CD8-positive, alpha-beta T cell (primary cell): ENCODE measurements at regions of chr7 and their contacts with region 1.

Region 1: DNA sequence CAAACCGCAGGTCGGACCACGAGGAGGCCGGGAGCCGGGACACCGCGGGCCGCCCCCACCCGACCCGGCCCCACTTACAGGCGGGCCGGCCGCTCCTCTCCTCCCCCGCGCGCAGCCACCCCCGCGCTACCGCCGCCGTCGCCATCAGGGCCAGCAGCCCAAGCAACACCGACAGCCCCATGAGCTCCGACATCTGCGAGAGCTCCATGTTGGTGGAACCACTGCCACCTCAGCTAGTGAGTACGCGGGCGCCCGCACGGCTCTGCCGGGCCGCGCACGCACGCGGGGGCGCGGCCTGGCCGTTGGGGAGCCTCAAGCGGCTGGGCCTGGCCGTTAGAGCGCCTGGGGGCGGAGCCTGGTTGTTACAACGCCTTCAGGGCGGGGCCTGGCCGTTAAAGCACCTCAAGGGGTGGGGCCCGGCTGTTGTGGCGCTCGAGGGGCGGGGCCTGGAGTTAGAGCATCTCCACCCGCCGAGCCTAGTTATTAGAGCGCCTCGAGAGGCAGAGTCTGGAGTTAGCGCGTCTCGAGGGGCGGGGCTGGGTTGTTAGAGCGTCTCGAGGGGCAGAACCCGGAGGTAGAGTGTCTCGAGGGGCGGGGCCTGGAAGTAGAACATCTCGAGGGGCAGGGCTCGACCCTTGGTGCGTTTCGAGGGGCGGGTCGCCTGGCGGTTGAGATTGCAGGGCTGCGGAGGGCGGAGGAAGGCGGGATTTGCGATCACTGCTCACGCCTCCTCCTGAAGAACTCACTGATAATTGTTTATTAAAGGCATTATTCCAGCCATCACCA is at the start of gene TBL2:
- DNase-seq: peak; percentile 96 to 99 (median 99)
- ATAC-seq: peak; percentile 91
- H3K4me3 ChIP-seq: peak within 1 kb of the TSS; percentile 77 to 97
- H3K4me3 Mint-ChIP-seq: peak within 1 kb of the TSS; percentile 94
- H3K27ac ChIP-seq: peak within 1 kb of the TSS; percentile 72 to 95
- H3K27ac Mint-ChIP-seq: peak within 1 kb of the TSS; percentile 97
- H3K4me1 ChIP-seq: peaks cover 21% of the 10 kb centered on the region
- H3K4me1 Mint-ChIP-seq: peaks cover 27% of the 10 kb centered on the region
- H3K27me3 ChIP-seq: no peaks in the 10 kb centered on the region
- H3K27me3 Mint-ChIP-seq: no peaks in the 10 kb centered on the region
- CTCF ChIP-seq: no peak
- total RNA-seq, gene TBL2: 14.9 to 16.7 TPM

Region 2: GRCh38 chr7:73522105-73522872 is 56.2 kb before region 1 on chr7 and contains the start of gene BAZ1B:
- CTCF ChIA-PET with region 1: no interaction called
- POLR2A ChIA-PET with region 1: interaction called, 20 read pairs
- intact Hi-C with region 1: loop called (anchors 1 kb)
- DNase-seq: peak; percentile 92 to 98 (median 96)
- ATAC-seq: peak; percentile 93
- H3K4me3 ChIP-seq: peak within 1 kb of the TSS; percentile 65 to 87
- H3K4me3 Mint-ChIP-seq: peak within 1 kb of the TSS; percentile 93
- H3K27ac ChIP-seq: peak within 1 kb of the TSS; percentile 90 to 92
- H3K27ac Mint-ChIP-seq: peak within 1 kb of the TSS; percentile 96
- H3K4me1 ChIP-seq: peaks cover 59% of the 10 kb centered on the region
- H3K4me1 Mint-ChIP-seq: peaks cover 66% of the 10 kb centered on the region
- H3K27me3 ChIP-seq: no peaks in the 10 kb centered on the region
- H3K27me3 Mint-ChIP-seq: no peaks in the 10 kb centered on the region
- CTCF ChIP-seq: no peak
- total RNA-seq, gene BAZ1B: 32.2 to 37.2 TPM

Region 3: DNA sequence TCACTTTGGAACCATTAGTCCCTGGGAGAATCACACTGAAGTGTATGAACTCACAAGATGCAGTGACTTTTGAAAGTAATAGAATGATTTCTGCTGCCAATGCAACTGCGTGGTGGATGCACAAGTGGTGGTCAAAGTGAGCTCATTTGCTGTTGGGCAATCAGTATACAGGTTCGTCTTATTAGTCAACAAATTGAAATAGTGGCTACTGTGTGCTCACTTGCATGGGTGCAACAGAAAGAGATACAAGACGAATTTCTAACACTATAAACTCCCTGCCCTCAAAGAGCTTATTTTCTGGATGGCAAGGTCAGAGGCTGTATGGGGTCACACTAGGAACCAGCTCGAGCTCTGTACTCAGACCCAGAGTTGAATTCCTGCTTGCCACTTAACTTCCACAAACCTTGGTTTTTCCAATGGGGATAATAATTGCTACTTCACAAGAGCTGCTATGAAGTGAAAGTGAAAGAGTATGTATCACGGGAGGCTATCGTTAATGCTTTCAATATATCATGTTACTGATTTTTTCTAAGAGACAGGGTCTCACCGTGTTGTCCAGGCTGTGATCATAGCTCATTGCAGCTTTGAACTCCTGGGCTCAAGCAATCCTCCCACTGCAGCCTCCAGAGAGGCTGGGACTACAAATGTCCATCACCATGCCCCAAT is 12.7 kb before region 1 on chr7:
- CTCF ChIA-PET with region 1: interaction called, 3 read pairs
- POLR2A ChIA-PET with region 1: interaction called, 14 read pairs
- intact Hi-C with region 1: no loop called
- DNase-seq: peak in 1 of 9 experiments; percentile 37
- ATAC-seq: no peak
- H3K4me3 ChIP-seq: peak overlapping the region; percentile 18 to 49
- H3K4me3 Mint-ChIP-seq: peak overlapping the region; percentile 85
- H3K27ac ChIP-seq: peak overlapping the region in 1 of 2 experiments; percentile 44
- H3K27ac Mint-ChIP-seq: peak overlapping the region; percentile 83
- H3K4me1 ChIP-seq: peaks cover 11% of the 10 kb centered on the region
- H3K4me1 Mint-ChIP-seq: peaks cover 33% of the 10 kb centered on the region
- H3K27me3 ChIP-seq: no peaks in the 10 kb centered on the region
- H3K27me3 Mint-ChIP-seq: no peaks in the 10 kb centered on the region
- CTCF ChIP-seq: no peak

Region 4: DNA sequence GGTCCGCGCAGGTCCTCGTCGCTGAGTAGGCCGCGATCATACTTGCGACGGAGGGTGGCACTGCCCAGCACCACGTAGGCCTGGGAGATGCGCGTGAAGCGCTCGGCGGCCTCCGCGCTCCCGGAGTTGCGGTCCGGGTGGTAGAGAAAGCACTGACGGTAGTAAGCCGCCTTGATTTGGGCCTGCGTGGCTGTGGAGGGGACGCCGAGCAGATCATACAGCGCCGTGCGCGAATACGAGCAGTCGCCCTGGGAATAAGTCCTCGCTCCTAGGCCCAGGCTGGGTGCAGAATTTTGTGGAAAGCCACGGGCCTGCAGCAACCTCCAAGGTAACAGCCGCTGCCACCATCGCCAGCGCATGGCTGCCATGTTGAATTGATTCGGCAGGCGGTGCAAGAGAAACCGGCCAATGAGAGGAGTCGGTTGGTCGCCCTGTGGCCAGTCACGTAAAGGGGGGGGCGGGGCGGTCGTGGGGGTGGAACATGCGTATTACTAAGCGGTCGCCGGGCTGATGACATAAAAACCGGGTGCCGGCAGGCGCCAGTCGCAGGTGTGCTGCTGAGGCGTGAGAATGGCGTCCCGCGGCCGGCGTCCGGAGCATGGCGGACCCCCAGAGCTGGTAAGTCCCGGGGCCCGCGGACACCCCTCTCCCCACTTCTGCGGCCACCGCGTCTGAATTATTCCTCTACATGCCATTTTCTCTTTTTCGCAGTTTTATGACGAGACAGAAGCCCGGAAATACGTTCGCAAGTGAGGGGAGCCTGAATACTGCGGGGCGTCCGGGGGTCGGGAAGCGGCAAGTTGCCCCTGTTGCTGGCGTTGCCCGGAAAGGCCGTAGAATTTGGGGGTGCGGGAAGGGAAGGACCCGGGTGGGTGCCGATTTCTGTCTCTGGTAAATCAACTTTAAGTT is 104.8 kb after region 1 on chr7 and contains the starts of genes BUD23 and DNAJC30:
- CTCF ChIA-PET with region 1: no interaction called
- POLR2A ChIA-PET with region 1: no interaction called
- intact Hi-C with region 1: loop called (anchors 1 to 5 kb)
- DNase-seq: peak; percentile 95 to 97 (median 97)
- ATAC-seq: peak; percentile 98
- H3K4me3 ChIP-seq: peak within 1 kb of the TSS; percentile 80 to 96
- H3K4me3 Mint-ChIP-seq: peak within 1 kb of the TSS; percentile 93
- H3K27ac ChIP-seq: peak within 1 kb of the TSS; percentile 81 to 90
- H3K27ac Mint-ChIP-seq: peak within 1 kb of the TSS; percentile 97
- H3K4me1 ChIP-seq: peaks cover 29% of the 10 kb centered on the region
- H3K4me1 Mint-ChIP-seq: peaks cover 39% of the 10 kb centered on the region
- H3K27me3 ChIP-seq: no peaks in the 10 kb centered on the region
- H3K27me3 Mint-ChIP-seq: no peaks in the 10 kb centered on the region
- CTCF ChIP-seq: no peak
- total RNA-seq, gene BUD23: 123 to 129 TPM
- total RNA-seq, gene DNAJC30: 13.5 to 14.4 TPM

Region 5: DNA sequence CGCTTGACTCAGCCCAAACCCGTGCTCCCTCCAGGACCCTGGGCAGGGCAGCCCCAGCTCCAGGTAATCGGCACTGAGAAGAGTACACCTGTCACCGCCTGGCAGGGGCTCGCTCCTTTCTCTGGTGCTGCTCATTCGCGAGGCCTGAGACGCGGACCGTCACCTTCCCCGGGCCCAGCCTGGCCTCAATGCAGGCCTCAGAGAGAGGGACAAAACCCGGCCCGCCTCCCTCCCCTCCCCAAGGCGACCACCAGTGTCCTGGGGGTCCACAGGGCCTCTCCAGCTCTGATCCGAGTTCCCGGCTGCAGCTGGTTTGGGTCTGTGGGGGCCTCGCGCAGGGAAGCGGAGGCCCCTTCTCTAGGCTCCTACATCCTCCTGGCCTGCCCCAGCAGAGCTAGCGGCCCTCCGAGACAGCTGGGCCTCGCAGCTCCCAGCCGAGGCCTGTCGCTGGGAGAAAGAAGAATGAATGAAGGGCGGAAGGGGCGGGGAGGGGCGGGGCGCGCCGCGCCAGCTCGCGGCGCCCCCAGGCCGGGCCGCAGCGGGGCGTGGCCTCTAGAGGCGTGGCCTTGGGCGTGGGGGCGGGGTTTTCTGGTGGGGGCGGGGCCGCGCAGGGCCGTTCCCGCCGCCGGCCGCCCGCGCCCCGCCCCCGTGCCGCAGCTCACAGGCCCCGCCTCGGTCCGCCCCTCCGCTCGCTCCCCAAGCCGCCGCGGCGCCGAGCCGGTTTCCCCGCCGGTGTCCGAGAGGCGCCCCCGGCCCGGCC is 504.8 kb after region 1 on chr7 and contains the start of gene LIMK1:
- CTCF ChIA-PET with region 1: no interaction called
- POLR2A ChIA-PET with region 1: no interaction called
- intact Hi-C with region 1: loop called in 1 of 2 experiments (anchors 10 kb)
- DNase-seq: peak; percentile 68 to 91 (median 81)
- ATAC-seq: peak; percentile 97
- H3K4me3 ChIP-seq: peak within 1 kb of the TSS; percentile 61
- H3K4me3 Mint-ChIP-seq: peak within 1 kb of the TSS; percentile 81
- H3K27ac ChIP-seq: peak within 1 kb of the TSS in 1 of 2 experiments; percentile 36
- H3K27ac Mint-ChIP-seq: no peak within 1 kb of the TSS
- H3K4me1 ChIP-seq: peaks cover 12% of the 10 kb centered on the region
- H3K4me1 Mint-ChIP-seq: peaks cover 9% of the 10 kb centered on the region
- H3K27me3 ChIP-seq: no peaks in the 10 kb centered on the region
- H3K27me3 Mint-ChIP-seq: no peaks in the 10 kb centered on the region
- CTCF ChIP-seq: no peak
- total RNA-seq, gene LIMK1: 12.8 to 13.7 TPM